ENCODE measurements at regions of chr20 and their contacts with region 1.

Region 1: DNA sequence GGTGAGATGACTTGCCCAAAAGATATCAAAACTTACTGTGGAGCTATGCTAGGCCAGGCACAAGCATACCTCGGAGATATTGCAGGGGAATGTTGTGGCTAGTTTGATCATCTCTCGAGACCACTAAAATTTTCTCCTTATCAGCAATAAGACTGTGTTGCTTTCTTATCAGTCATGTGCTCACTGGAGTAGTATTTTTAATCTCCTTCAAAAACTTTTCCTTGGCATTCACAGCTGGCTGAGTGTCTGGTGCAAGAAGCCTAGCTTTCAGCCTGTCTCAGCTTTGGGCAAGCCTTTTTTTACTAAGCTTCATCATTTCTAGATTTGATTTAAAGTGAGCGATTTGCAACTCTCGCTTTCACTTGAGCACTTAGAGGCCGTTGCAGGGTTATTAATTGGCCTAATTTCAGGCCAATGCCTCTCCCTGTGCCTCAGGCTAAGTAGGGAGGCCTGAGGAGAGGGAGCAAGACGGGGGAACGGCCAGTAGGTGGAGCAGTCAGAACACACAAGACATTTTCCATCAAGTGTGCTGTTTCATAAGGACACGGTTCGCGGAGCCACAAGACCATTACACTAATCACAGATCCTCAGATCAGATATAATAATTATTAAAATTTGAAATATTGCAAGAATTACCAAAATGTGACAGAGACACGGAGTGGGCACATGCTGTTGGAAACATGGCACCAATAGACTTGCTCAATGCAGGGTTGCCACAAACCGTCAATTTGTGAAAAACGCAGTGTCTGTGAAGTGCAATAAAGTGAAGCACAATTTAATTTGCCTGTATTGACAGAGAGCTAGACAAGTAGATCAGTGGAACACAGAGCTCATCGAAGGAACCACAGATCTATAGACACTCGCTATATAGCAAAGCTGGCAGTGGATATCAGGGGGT is 106.8 kb upstream of the SIRPG start:
- DNase-seq: peak; percentile 23 to 87
- H3K4me3 ChIP-seq: no peak overlapping the region
- H3K27ac ChIP-seq: no peak overlapping the region
- H3K4me1 ChIP-seq: peaks cover 0 to 6% of the 10 kb centered on the region in 2 donors
- H3K27me3 ChIP-seq: no peaks in the 10 kb centered on the region
- CTCF ChIP-seq: peak; percentile 52 to 80 (median 73)

Region 2: GRCh38 chr20:1776681-1777475 is 12.5 kb after region 1 on chr20:
- intact Hi-C with region 1: loop called (anchors 1 kb)
- DNase-seq: peak; percentile 41 to 93
- H3K4me3 ChIP-seq: peak overlapping the region; percentile 60 to 74
- H3K27ac ChIP-seq: no peak overlapping the region
- H3K4me1 ChIP-seq: peaks cover 0 to 8% of the 10 kb centered on the region in 2 donors
- H3K27me3 ChIP-seq: no peaks in the 10 kb centered on the region
- CTCF ChIP-seq: peak; percentile 71 to 83 (median 82)

Region 3: GRCh38 chr20:2172305-2173175 is 408.2 kb after region 1 on chr20:
- intact Hi-C with region 1: loop called (anchors 2 kb)
- DNase-seq: peak in 1 of 2 donors; percentile 84
- H3K4me3 ChIP-seq: no peak overlapping the region
- H3K27ac ChIP-seq: no peak overlapping the region
- H3K4me1 ChIP-seq: peaks cover 0 to 3% of the 10 kb centered on the region in 2 donors
- H3K27me3 ChIP-seq: no peaks in the 10 kb centered on the region
- CTCF ChIP-seq: peak; percentile 79 to 95 (median 87)

Region 4: GRCh38 chr20:2451939-2452732 is 687.8 kb after region 1 on chr20:
- intact Hi-C with region 1: loop called (anchors 5 kb)
- DNase-seq: peak in 1 of 2 donors; percentile 79
- H3K4me3 ChIP-seq: no peak overlapping the region
- H3K27ac ChIP-seq: no peak overlapping the region
- H3K4me1 ChIP-seq: peaks cover 0 to 6% of the 10 kb centered on the region in 2 donors
- H3K27me3 ChIP-seq: no peaks in the 10 kb centered on the region
- CTCF ChIP-seq: peak; percentile 22 to 84 (median 75)